ENCODE measurements at regions of chr1 and their contacts with region 1.

Region 1: DNA sequence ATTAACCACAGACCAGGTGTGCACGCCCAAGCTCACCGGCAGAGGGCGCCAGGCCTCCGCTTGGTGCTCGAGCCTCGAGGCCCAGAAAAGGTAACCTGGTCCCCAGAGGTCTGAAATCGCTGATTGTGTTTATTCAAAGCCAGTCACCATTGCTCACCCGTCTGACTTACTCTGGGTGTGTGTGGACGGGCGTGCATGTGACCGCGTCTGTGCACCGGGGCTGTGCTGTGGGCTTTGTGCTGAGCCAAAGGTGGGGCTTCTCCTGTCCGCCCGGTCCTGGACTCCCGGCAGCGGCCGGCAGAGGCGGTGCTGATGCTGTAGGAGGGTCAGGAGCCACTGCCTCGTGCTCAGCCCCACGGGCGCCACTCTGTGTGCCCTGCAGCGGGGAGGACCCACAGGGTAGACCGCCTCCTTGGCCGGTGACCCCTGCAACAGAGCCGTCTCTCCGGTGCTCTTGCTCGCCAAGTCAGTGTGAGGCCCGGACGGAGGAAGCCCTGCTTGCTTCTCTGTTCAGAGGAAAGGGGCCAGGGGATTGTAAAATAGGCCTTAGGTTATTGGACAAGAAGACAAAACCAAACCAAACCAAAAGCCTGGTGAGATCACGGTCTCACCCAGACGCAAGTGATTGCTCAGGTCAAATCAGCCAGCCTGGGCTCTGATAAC is 32.0 kb upstream of the BTG2 start:
- DNase-seq: peak; percentile 81 to 93 (median 87)
- ATAC-seq: peak; percentile 90
- H3K4me3 ChIP-seq: no peak overlapping the region
- H3K27ac ChIP-seq: no peak overlapping the region
- H3K4me1 ChIP-seq: peaks cover 17 to 18% of the 10 kb centered on the region in 2 experiments; a peak in 4 of 5 replicates
- H3K27me3 ChIP-seq: peaks cover 0 to 18% of the 10 kb centered on the region in 2 experiments; a peak in 1 of 5 replicates
- CTCF ChIP-seq: peak; percentile 96 to 100 (median 98)
- EP300 ChIP-seq: peak; percentile 14; the same call in 1 of the 2 replicates
- POLR2A ChIP-seq: no peak
- RAD21 ChIP-seq: peak; percentile 100

Region 2: DNA sequence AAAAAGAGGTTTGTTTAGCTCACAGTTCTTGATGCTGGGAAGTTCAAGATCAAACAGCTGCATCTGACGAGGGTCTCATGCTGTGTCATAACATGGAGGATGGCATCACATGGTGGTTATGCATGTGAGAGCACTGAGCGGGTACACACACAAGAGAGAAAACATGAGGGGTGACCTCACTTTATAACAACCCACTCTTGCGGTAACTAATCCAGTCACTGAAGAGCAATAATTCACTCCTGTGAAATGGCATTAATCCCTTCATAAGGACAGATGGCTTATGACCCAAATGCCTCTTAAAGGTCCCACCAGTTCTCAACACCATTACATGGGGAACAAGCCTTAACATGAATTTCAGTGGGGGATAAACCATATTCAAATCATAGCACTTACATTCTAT is 20.7 kb before region 1 on chr1:
- CTCF ChIA-PET with region 1: no interaction called
- POLR2A ChIA-PET with region 1: no interaction called
- in situ Hi-C with region 1: no loop called
- intact Hi-C with region 1: no loop called
- DNase-seq: no peak
- ATAC-seq: no peak
- H3K4me3 ChIP-seq: no peak overlapping the region
- H3K27ac ChIP-seq: no peak overlapping the region
- H3K4me1 ChIP-seq: no peaks in the 10 kb centered on the region
- H3K27me3 ChIP-seq: peaks cover 0 to 4% of the 10 kb centered on the region in 2 experiments; a peak in 3 of 5 replicates
- CTCF ChIP-seq: no peak
- EP300 ChIP-seq: no peak
- POLR2A ChIP-seq: no peak
- RAD21 ChIP-seq: no peak

Region 3: DNA sequence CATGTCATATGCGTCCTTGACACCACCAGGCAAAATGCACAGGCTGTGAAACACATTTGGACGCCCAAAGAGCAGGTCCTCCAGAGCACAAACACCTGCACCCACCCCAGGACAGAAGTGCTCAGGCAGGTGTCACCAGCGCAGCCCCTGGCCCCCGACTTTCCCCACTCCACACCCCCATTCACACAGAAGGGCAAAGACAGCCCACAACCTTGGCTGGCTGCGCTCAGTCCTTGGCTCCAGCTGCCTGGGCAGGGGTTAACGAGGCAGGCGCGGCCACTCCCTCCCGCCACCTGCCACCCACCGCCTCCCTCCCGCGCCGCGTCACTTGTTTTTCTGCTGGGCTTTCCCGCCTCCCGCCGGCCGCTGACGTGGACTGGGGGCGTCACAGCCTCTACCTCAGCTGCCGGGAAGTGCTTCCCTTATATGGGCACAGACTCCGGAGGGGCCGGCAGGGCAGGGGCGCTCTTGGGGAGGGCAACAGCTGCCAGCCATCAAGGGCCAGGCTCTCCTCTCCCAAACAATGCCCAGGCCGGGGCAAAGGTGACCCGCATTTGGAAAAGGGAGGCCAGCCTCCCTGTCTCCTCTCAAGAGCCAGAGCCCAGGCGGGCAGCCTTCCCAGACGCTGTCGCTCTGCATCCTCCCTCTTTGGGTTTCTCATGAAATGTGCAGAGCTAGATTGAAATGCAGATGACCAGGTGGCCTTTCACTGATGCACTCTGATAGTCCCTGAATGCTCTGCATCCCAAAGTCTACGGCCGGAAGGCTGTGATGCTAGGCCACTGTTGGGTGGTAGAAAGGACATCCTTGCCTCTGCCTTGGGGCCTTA is 17.1 kb after region 1 on chr1:
- CTCF ChIA-PET with region 1: interaction called, 5 read pairs
- POLR2A ChIA-PET with region 1: interaction called, 13 read pairs
- in situ Hi-C with region 1: no loop called
- intact Hi-C with region 1: no loop called
- DNase-seq: peak; percentile 85 to 92 (median 90)
- ATAC-seq: peak; percentile 80
- H3K4me3 ChIP-seq: no peak overlapping the region
- H3K27ac ChIP-seq: peak overlapping the region; percentile 50; the same call in 2 of the 3 replicates
- H3K4me1 ChIP-seq: peaks cover 38 to 53% of the 10 kb centered on the region in 2 experiments
- H3K27me3 ChIP-seq: no peaks in the 10 kb centered on the region
- CTCF ChIP-seq: no peak
- EP300 ChIP-seq: no peak
- POLR2A ChIP-seq: no peak; the same call in 1 of the 2 replicates
- RAD21 ChIP-seq: no peak

Region 4: GRCh38 chr1:203304919-203305808 is 31.8 kb after region 1 on chr1 and contains the start of gene BTG2:
- CTCF ChIA-PET with region 1: interaction called, 4 read pairs
- POLR2A ChIA-PET with region 1: interaction called, 6 read pairs
- in situ Hi-C with region 1: no loop called
- intact Hi-C with region 1: loop called (anchors 1 kb)
- DNase-seq: peak; percentile 96 to 99 (median 98)
- ATAC-seq: peak; percentile 86
- H3K4me3 ChIP-seq: peak within 1 kb of the TSS; percentile 69
- H3K27ac ChIP-seq: peak within 1 kb of the TSS; percentile 90
- H3K4me1 ChIP-seq: peaks cover 65 to 67% of the 10 kb centered on the region in 2 experiments
- H3K27me3 ChIP-seq: no peaks in the 10 kb centered on the region
- CTCF ChIP-seq: no peak
- EP300 ChIP-seq: 0 out of 2 replicates have a peak, but pooled peaks have one; percentile 1
- POLR2A ChIP-seq: peak; percentile 95
- RAD21 ChIP-seq: peak in 1 of 2 experiments; percentile 3; a peak in 1 of 4 replicates
- polyA plus RNA-seq, gene BTG2: 2.3 to 3.8 TPM

Region 5: DNA sequence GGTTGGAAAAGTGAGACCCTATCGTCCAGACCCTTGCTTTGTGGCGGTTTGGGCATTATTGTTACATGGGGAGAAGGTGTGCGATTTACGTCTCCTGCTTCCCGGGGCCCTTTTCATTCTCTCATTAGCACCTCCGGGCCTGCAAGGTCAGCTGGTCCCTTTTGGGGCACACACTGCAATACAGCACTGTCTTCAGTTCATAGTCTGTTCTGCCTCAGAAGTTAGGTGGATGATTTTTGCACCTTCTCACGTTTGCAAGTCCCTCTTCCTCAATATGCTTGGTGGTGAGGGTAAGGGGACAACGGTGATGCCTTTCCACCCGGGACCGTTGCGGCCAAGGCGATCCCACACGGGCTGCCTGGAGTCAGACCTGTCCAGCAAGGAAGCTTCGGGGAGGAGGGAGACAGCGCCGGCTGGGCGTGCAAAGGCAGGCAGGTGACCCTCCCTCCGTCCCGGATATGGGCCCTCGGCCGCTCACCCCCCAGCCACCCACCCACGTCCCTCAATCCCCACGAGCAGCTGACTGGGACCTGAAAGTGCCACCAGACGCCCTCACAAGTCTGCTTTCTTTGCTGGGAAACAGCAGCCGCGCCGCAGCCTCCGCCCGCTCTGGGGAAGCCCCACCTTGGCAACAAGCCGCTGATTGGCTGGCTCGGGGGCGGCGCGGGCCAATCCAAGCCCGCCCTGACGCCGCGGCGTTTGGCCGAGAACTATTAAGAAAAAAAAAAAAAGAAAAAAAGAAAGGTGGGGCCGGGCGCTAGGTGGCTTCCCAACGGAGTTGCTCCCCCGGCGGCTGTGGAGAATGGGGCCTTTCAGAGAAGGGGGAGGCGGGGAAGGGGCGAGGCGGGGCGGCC is 53.7 kb after region 1 on chr1:
- CTCF ChIA-PET with region 1: interaction called, 38 read pairs
- POLR2A ChIA-PET with region 1: interaction called, 5 read pairs
- in situ Hi-C with region 1: no loop called
- intact Hi-C with region 1: loop called (anchors 1 kb)
- DNase-seq: peak; percentile 96 to 99 (median 99)
- ATAC-seq: peak; percentile 98
- H3K4me3 ChIP-seq: peak overlapping the region; percentile 41
- H3K27ac ChIP-seq: peak overlapping the region; percentile 14; the same call in 2 of the 3 replicates
- H3K4me1 ChIP-seq: peaks cover 25 to 31% of the 10 kb centered on the region in 2 experiments; a peak in 4 of 5 replicates
- H3K27me3 ChIP-seq: peaks cover 10 to 27% of the 10 kb centered on the region in 2 experiments; a peak in 4 of 5 replicates
- CTCF ChIP-seq: 0 out of 6 replicates have a peak, but pooled peaks of 1 of the 3 experiments have one; percentile 38
- EP300 ChIP-seq: no peak
- POLR2A ChIP-seq: peak; percentile 43; the same call in 1 of the 2 replicates
- RAD21 ChIP-seq: no peak

Region 6: GRCh38 chr1:203340112-203340804 is 66.9 kb after region 1 on chr1:
- CTCF ChIA-PET with region 1: interaction called, 226 read pairs
- POLR2A ChIA-PET with region 1: interaction called, 5 read pairs
- in situ Hi-C with region 1: loop called (anchors 5 kb)
- intact Hi-C with region 1: loop called (anchors 1 kb)
- DNase-seq: peak; percentile 84 to 88 (median 88)
- ATAC-seq: peak; percentile 87
- H3K4me3 ChIP-seq: no peak overlapping the region
- H3K27ac ChIP-seq: no peak overlapping the region
- H3K4me1 ChIP-seq: peaks cover 0 to 4% of the 10 kb centered on the region in 2 experiments; a peak in 3 of 5 replicates
- H3K27me3 ChIP-seq: peaks cover 26 to 44% of the 10 kb centered on the region in 2 experiments
- CTCF ChIP-seq: peak; percentile 93 to 97 (median 94)
- EP300 ChIP-seq: no peak
- POLR2A ChIP-seq: no peak
- RAD21 ChIP-seq: peak; percentile 93 to 94

Region 7: GRCh38 chr1:203486618-203487370 is 213.5 kb after region 1 on chr1:
- CTCF ChIA-PET with region 1: interaction called, 28 read pairs
- POLR2A ChIA-PET with region 1: no interaction called
- in situ Hi-C with region 1: loop called (anchors 5 kb)
- intact Hi-C with region 1: loop called (anchors 1 kb)
- DNase-seq: no peak
- ATAC-seq: peak; percentile 5
- H3K4me3 ChIP-seq: peak overlapping the region; percentile 38; the same call in 1 of the 2 replicates
- H3K27ac ChIP-seq: no peak overlapping the region
- H3K4me1 ChIP-seq: peaks cover 0 to 14% of the 10 kb centered on the region in 2 experiments; a peak in 2 of 5 replicates
- H3K27me3 ChIP-seq: peaks cover 34 to 45% of the 10 kb centered on the region in 2 experiments
- CTCF ChIP-seq: no peak
- EP300 ChIP-seq: no peak
- POLR2A ChIP-seq: no peak
- RAD21 ChIP-seq: no peak

Measured in K562 (cell line).